ENCODE measurements at regions of chr17 and their contacts with region 1.

Region 1: GRCh38 chr17:17859909-17860765 is 23.4 kb upstream of the SREBF1 start:
- DNase-seq: peak; percentile 84
- H3K4me3 ChIP-seq: no peak overlapping the region; a peak in 1 of 4 replicates
- H3K27ac ChIP-seq: no peak overlapping the region; a peak in 1 of 4 replicates
- H3K4me1 ChIP-seq: peaks cover 0 to 47% of the 10 kb centered on the region in 2 experiments; a peak in 1 of 4 replicates
- H3K27me3 ChIP-seq: no peaks in the 10 kb centered on the region
- CTCF ChIP-seq: peak; percentile 92
- EP300 ChIP-seq: no peak
- RAD21 ChIP-seq: peak; percentile 95

Region 2: GRCh38 chr17:17823433-17824118 is 36.6 kb before region 1 on chr17:
- CTCF ChIA-PET with region 1: interaction called, 32 read pairs
- POLR2A ChIA-PET with region 1: interaction called, 3 read pairs
- DNase-seq: peak; percentile 99
- H3K4me3 ChIP-seq: peak overlapping the region; percentile 49 to 57
- H3K27ac ChIP-seq: peak overlapping the region; percentile 40 to 97
- H3K4me1 ChIP-seq: peaks cover 40 to 94% of the 10 kb centered on the region in 2 experiments
- H3K27me3 ChIP-seq: no peaks in the 10 kb centered on the region
- CTCF ChIP-seq: no peak
- EP300 ChIP-seq: 0 out of 4 replicates have a peak, but pooled peaks of 1 of the 2 experiments have one; percentile 18
- RAD21 ChIP-seq: no peak

Region 3: DNA sequence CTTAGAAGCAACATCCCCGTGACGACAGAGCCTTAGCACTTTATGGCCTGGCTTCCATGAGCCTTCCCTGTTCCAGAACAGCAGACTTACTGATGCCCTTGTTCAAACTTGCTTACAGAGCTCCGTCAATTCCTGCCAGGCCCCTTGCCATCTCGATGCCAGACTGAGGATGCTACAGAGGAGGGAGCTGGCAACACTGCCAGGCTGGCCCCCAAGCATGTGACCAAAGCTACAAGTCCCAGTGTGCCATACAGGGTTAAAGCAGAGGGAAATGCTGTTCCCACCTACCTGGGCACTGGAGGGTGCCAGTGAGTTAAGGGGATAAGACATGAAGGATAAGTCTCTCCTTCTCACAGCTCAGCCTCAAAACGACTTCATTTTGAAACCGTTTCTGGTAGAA is 10.1 kb after region 1 on chr17:
- CTCF ChIA-PET with region 1: interaction called, 17 read pairs
- POLR2A ChIA-PET with region 1: no interaction called
- DNase-seq: no peak
- H3K4me3 ChIP-seq: no peak overlapping the region
- H3K27ac ChIP-seq: no peak overlapping the region; a peak in 1 of 4 replicates
- H3K4me1 ChIP-seq: peaks cover 0 to 38% of the 10 kb centered on the region in 2 experiments; a peak in 3 of 4 replicates
- H3K27me3 ChIP-seq: no peaks in the 10 kb centered on the region
- CTCF ChIP-seq: no peak
- EP300 ChIP-seq: no peak
- RAD21 ChIP-seq: no peak

Region 4: DNA sequence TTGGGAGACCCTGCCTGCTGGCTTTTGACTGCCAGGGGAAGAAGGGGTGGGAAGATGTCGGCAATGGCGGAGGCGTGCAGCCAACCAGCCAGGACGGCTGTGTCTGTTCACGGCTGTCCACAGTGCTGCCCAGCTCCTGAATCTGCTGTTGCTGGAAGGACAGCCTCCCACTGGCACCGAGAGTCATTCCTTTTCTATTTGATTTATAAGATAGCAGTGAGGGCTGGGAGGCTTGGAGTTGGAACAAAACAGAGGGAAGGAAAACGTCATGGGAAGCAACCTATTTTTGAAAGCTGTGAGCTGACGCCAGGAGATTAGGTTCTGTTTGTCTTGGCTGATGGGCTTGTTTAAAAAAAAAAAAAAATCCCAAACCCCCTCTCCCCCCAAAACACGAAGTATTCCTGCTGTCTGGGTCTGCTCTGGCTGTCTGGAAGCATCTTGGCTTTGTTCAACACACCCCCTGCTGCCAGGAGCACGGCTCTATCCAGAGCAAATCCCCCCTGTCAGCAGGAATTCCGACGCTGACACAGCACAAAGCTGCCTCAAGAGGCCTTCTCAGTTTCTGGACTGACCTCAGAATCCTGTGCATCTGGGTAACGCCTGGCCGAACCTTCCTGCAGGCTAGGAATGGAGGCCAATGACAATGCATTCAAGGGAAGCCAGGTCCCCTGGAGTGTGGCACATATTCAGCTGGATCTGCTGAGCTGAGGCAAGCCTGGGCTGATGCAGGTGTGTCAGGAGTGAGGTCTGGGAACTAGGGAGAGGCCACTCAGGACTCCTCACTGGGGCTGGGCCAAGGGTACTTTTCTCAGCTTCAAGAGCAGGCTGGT is 17.6 kb after region 1 on chr17:
- CTCF ChIA-PET with region 1: interaction called, 17 read pairs
- POLR2A ChIA-PET with region 1: no interaction called
- DNase-seq: peak; percentile 74
- H3K4me3 ChIP-seq: 0 out of 4 replicates have a peak overlapping the region, but pooled peaks of 1 of the 2 experiments have one; percentile 9
- H3K27ac ChIP-seq: peak overlapping the region; percentile 84 to 99
- H3K4me1 ChIP-seq: peaks cover 15 to 55% of the 10 kb centered on the region in 2 experiments
- H3K27me3 ChIP-seq: no peaks in the 10 kb centered on the region
- CTCF ChIP-seq: 0 out of 2 replicates have a peak, but pooled peaks have one; percentile 21
- EP300 ChIP-seq: no peak; a peak in 1 of 4 replicates
- RAD21 ChIP-seq: peak; percentile 20

Region 5: GRCh38 chr17:17935321-17936271 is 75.5 kb after region 1 on chr17:
- CTCF ChIA-PET with region 1: no interaction called
- POLR2A ChIA-PET with region 1: no interaction called
- DNase-seq: no peak
- H3K4me3 ChIP-seq: no peak overlapping the region
- H3K27ac ChIP-seq: peak overlapping the region; percentile 56 to 79
- H3K4me1 ChIP-seq: peaks cover 49 to 74% of the 10 kb centered on the region in 2 experiments
- H3K27me3 ChIP-seq: no peaks in the 10 kb centered on the region
- CTCF ChIP-seq: no peak
- EP300 ChIP-seq: peak; percentile 57 to 80
- RAD21 ChIP-seq: no peak